Left ventricle myocardium inferior (tissue), 1 donor: ENCODE measurements at regions of chr14 and their contacts with region 1.

Region 1: DNA sequence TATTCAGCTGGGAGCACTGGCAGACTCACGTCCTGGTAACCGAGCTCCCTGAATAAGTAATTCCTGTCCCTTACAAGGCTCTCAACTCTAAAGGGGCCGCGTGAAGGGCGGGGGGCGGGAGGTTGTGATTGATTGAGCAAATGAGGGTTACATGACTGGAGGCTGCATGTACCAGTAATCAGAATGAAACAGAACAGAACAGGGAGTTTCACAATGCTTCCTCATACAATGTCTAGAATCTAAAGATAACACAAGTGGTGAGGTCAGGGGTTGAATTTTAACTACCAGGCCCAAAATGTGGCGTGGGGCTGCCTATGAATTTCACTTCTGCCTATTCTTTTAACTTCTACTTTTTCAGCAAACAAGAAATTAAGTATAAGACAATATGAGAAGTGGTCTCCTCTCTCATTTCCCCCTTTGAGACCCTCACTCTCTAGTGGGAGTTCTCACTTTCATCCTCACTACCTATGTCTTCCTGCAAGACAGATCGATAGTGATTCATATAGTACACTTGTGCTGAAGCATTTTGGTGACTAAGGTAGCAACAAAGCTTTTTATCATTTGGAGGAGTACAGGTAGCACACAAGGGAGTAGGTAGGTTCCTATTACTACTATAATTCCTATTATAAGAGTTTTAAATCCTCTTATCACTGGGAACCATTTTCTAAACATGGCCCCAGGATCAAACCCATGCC is 239.8 kb downstream of the KTN1 start:
- DNase-seq: no peak
- H3K4me3 ChIP-seq: no peak overlapping the region
- H3K27ac ChIP-seq: no peak overlapping the region
- H3K4me1 ChIP-seq: no peaks in the 10 kb centered on the region
- H3K27me3 ChIP-seq: no peaks in the 10 kb centered on the region
- CTCF ChIP-seq: no peak

Region 2: GRCh38 chr14:55514819-55515490 is 304.8 kb before region 1 on chr14:
- intact Hi-C with region 1: no loop called
- DNase-seq: no peak
- H3K4me3 ChIP-seq: no peak overlapping the region
- H3K27ac ChIP-seq: no peak overlapping the region
- H3K4me1 ChIP-seq: no peaks in the 10 kb centered on the region
- H3K27me3 ChIP-seq: no peaks in the 10 kb centered on the region
- CTCF ChIP-seq: no peak

Region 3: DNA sequence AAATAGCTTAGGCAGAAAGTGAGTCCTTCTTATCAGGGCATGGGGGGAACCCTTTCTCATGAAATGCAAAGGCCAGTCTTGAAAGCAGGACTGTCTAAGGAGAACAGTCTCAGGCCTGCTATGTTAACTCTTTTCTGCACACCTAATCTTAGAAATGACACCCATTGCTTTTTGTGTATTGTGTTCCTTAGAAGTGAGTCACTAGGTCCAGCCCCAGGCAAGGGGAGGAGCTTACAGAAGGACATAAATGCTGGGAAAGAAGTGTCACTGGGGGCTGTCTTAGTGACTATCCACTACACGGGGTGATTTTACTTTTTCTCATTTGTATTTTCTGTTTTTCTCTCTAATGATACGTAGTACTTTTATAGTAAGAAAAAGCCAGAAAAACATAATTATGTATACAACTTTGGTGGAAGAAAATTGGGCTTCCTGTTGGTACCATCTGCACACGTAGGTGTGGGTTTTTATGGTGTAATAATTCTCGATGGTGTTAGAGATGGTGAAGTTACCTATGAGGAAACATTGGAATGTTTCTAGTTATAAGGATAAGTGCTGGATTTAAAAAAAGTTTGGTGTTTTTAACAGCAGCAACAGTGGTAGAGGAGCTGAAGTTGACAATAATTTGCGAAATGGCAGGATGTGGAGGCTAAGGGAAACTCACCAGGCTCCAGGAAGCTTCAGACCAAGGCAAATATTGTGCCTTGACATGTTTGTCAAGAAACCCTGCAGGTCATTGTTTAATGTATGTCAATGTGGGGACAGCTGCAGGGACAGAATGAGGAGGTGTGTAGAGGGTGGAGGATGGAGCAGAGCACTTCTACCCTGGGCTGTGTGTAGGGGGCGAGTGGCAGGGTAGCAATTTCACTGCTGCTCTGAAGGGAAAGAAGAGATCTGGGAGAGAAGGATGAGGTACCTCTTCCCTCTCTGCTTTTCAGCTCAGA is 24.8 kb before region 1 on chr14:
- intact Hi-C with region 1: loop called (anchors 2 kb)
- DNase-seq: no peak
- H3K4me3 ChIP-seq: no peak overlapping the region
- H3K27ac ChIP-seq: no peak overlapping the region
- H3K4me1 ChIP-seq: peaks cover 3% of the 10 kb centered on the region
- H3K27me3 ChIP-seq: no peaks in the 10 kb centered on the region
- CTCF ChIP-seq: no peak